ENCODE measurements at regions of chr5 and their contacts with region 1.

Region 1: GRCh38 chr5:68287976-68288706 is 72.6 kb downstream of the PIK3R1 start:
- DNase-seq: peak; percentile 87 to 88
- H3K4me3 ChIP-seq: peak overlapping the region; percentile 8 to 40 (median 35)
- H3K27ac ChIP-seq: peak overlapping the region; percentile 77 to 95 (median 94)
- H3K4me1 ChIP-seq: peaks cover 25 to 26% of the 10 kb centered on the region in 2 donors
- H3K27me3 ChIP-seq: no peaks in the 10 kb centered on the region
- CTCF ChIP-seq: peak in 3 of 6 experiments; percentile 4 to 10 (median 5)
- POLR2A ChIP-seq: peak; percentile 20 to 78

Region 2: GRCh38 chr5:68460147-68460798 is 172.1 kb after region 1 on chr5:
- intact Hi-C with region 1: loop called (anchors 5 kb)
- DNase-seq: peak; percentile 24 to 34
- H3K4me3 ChIP-seq: no peak overlapping the region
- H3K27ac ChIP-seq: peak overlapping the region in 1 of 3 donors; percentile 16
- H3K4me1 ChIP-seq: peaks cover 20 to 28% of the 10 kb centered on the region in 2 donors
- H3K27me3 ChIP-seq: no peaks in the 10 kb centered on the region
- CTCF ChIP-seq: peak; percentile 38 to 77 (median 60)
- POLR2A ChIP-seq: no peak

Region 3: GRCh38 chr5:68962757-68963484 is 674.8 kb after region 1 on chr5:
- intact Hi-C with region 1: loop called (anchors 5 kb)
- DNase-seq: peak; percentile 72 to 73
- H3K4me3 ChIP-seq: no peak overlapping the region
- H3K27ac ChIP-seq: no peak overlapping the region
- H3K4me1 ChIP-seq: peaks cover 4% of the 10 kb centered on the region in 2 donors
- H3K27me3 ChIP-seq: no peaks in the 10 kb centered on the region
- CTCF ChIP-seq: peak; percentile 64 to 84 (median 76)
- POLR2A ChIP-seq: no peak

Measured in thyroid gland (tissue), 4 donors.